Mammary epithelial cell (primary cell): ENCODE measurements at regions of chr20 and their contacts with region 1.

Region 1: DNA sequence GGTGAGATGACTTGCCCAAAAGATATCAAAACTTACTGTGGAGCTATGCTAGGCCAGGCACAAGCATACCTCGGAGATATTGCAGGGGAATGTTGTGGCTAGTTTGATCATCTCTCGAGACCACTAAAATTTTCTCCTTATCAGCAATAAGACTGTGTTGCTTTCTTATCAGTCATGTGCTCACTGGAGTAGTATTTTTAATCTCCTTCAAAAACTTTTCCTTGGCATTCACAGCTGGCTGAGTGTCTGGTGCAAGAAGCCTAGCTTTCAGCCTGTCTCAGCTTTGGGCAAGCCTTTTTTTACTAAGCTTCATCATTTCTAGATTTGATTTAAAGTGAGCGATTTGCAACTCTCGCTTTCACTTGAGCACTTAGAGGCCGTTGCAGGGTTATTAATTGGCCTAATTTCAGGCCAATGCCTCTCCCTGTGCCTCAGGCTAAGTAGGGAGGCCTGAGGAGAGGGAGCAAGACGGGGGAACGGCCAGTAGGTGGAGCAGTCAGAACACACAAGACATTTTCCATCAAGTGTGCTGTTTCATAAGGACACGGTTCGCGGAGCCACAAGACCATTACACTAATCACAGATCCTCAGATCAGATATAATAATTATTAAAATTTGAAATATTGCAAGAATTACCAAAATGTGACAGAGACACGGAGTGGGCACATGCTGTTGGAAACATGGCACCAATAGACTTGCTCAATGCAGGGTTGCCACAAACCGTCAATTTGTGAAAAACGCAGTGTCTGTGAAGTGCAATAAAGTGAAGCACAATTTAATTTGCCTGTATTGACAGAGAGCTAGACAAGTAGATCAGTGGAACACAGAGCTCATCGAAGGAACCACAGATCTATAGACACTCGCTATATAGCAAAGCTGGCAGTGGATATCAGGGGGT is 106.8 kb upstream of the SIRPG start:
- DNase-seq: peak; percentile 66
- H3K4me3 ChIP-seq: no peak overlapping the region
- H3K27ac ChIP-seq: no peak overlapping the region
- H3K4me1 ChIP-seq: peaks cover 18% of the 10 kb centered on the region
- H3K27me3 ChIP-seq: no peaks in the 10 kb centered on the region
- CTCF ChIP-seq: peak; percentile 86 to 91

Region 2: DNA sequence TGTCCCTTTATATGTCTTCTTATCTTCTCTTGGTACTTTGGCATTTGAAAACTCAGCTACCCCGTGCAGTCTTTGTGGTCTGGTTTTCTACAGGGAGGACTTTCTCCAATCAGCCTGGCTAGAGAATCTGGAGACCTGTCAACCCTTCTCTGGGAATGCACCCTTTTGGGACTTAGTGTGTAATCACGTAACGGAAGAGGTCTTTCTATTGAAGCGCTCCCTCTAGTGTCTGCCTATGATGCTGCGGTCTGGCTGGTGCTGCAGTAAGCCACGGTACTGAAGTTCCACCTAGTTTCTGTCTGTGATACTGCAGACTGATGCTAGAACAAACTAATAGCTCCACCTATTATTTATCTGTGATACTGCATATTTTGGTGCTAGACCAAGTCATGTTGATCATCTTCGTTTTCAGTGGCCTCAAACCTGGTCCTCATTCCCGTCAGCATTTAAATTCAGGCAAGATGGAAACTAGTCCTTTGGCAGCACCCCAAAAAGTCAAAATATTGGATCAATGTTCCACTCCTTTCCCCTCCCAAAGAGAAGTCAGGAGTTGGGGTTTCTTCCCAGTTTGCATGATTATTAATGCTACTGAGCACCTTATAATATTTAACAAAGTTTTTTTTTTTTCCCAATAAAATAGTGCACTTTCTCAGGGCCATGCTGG is 260.7 kb before region 1 on chr20:
- CTCF ChIA-PET with region 1: no interaction called
- dilution Hi-C with region 1: no loop called
- in situ Hi-C with region 1: loop called in 1 of 2 experiments (anchors 25 kb)
- intact Hi-C with region 1: no loop called
- DNase-seq: peak; percentile 94
- H3K4me3 ChIP-seq: no peak overlapping the region
- H3K27ac ChIP-seq: peak overlapping the region; percentile 37
- H3K4me1 ChIP-seq: peaks cover 67% of the 10 kb centered on the region
- H3K27me3 ChIP-seq: no peaks in the 10 kb centered on the region
- CTCF ChIP-seq: peak; percentile 100

Region 3: DNA sequence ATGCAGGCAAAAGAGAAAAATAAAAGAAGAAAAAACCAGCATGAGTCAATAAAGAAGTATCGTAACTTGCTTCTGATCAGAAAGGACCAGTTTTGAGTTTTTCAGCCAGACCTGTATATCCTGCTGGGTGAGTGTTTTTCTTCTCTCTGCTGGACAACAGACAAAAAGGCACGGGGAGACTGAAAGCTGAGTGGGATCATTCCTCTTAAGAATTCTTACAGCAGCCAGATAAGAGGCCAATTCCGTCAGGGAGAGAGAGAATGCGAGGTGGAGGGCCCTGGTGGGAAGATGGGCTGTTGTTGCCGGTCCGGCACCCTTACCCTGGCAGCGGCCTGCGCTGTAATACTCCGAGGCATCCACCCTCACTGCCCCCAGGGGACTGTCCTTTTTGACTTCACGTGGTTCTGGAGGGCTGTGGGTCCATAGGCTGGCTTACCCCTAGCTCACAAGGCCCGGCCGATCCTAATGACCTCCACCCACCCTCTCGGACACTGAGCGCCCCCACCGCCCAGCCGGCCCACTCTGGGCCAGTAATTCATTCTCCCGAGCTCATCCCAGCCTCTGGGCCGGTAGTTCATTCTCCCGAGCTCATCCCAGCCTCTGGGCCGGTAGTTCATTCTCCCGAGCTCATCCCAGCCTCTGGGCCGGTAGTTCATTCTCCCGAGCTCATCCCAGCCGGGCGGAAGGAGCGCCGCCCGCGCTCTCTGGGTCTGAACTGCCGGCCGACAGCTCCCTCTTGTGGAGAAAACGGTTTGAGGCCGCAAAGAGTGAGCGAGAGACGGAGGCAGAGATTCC is 12.5 kb after region 1 on chr20:
- CTCF ChIA-PET with region 1: interaction called, 14 read pairs
- dilution Hi-C with region 1: no loop called
- in situ Hi-C with region 1: no loop called
- intact Hi-C with region 1: loop called (anchors 1 kb)
- DNase-seq: peak; percentile 80
- H3K4me3 ChIP-seq: peak overlapping the region; percentile 48 to 63 (median 57)
- H3K27ac ChIP-seq: peak overlapping the region; percentile 37
- H3K4me1 ChIP-seq: peaks cover 14% of the 10 kb centered on the region
- H3K27me3 ChIP-seq: no peaks in the 10 kb centered on the region
- CTCF ChIP-seq: peak; percentile 62 to 87

Region 4: GRCh38 chr20:1920252-1920651 is 155.9 kb after region 1 on chr20:
- CTCF ChIA-PET with region 1: no interaction called
- dilution Hi-C with region 1: no loop called
- in situ Hi-C with region 1: no loop called
- intact Hi-C with region 1: no loop called
- DNase-seq: no peak
- H3K4me3 ChIP-seq: no peak overlapping the region
- H3K27ac ChIP-seq: no peak overlapping the region
- H3K4me1 ChIP-seq: no peaks in the 10 kb centered on the region
- H3K27me3 ChIP-seq: no peaks in the 10 kb centered on the region
- CTCF ChIP-seq: no peak

Region 5: DNA sequence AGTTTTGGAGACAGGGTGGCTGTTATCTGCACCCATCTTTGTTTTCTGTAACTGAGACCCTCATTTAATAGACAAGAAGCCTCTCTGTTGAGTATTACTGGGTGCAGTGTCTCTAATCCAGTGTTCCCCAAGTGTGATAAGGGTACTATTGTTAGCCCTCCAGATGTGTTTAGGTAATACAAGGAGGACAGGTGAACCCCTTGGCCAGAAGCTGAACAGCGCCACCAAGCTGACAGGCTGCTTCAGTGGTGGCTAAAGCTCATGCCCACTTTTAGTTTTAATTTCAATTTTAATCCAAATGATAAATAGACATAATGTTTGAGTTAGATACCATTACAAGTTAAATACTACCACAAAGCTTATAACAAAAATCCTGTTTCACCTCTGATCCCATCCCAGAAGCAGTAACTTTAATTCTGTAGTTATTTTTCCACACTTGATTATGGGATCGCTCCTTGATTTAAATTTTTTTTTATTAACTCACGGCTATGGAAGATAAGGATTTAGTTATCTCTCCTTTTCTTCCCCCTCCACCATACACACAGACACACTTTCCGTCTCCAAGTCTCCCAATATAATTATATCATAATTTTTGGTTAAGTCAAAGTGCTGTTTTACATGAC is 328.9 kb after region 1 on chr20:
- CTCF ChIA-PET with region 1: no interaction called
- dilution Hi-C with region 1: no loop called
- in situ Hi-C with region 1: no loop called
- intact Hi-C with region 1: loop called (anchors 2 kb)
- DNase-seq: peak; percentile 9
- H3K4me3 ChIP-seq: no peak overlapping the region
- H3K27ac ChIP-seq: no peak overlapping the region
- H3K4me1 ChIP-seq: no peaks in the 10 kb centered on the region
- H3K27me3 ChIP-seq: no peaks in the 10 kb centered on the region
- CTCF ChIP-seq: peak; percentile 87 to 89

Region 6: DNA sequence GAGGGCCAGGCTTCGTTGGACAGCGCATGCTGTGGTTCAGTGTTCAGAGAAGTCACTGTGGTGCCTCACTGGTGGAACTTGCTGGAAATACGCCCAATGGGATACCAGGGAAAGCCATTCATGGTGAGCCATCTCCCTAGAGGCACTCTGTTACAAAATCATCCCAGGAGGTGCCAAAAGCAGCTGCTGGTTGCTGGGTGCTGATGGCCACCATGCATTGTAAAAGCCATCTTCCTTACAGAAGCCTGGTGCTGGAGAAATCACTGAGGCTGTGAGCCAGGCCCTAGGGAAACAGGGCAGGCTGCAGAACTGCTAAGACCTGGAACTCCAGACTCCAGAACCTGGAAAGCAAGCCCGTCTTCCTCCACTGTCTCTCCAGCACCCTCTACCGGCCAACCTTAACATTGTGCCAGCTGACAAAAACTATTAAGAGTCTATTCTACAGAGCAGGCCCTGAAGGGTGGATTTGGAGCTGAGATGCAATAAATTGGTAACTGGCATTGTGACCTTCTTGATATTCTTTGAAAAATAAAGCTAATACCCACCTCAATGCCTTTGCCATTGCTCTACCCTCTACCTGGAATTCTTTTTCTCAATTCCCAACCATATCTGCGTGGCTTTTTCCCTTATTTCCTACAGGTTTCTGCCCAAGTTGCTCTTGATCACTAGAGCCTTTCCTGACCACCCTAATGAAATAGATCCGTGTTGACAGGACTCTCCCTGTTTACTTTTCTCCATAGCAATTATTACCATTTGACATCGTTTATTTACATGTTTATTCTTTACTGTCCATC is 687.8 kb after region 1 on chr20:
- CTCF ChIA-PET with region 1: no interaction called
- dilution Hi-C with region 1: no loop called
- in situ Hi-C with region 1: no loop called
- intact Hi-C with region 1: loop called (anchors 5 kb)
- DNase-seq: peak; percentile 70
- H3K4me3 ChIP-seq: no peak overlapping the region
- H3K27ac ChIP-seq: no peak overlapping the region
- H3K4me1 ChIP-seq: peaks cover 11% of the 10 kb centered on the region
- H3K27me3 ChIP-seq: no peaks in the 10 kb centered on the region
- CTCF ChIP-seq: peak; percentile 90 to 92